ENCODE measurements at regions of chr9 and their contacts with region 1.

Region 1: DNA sequence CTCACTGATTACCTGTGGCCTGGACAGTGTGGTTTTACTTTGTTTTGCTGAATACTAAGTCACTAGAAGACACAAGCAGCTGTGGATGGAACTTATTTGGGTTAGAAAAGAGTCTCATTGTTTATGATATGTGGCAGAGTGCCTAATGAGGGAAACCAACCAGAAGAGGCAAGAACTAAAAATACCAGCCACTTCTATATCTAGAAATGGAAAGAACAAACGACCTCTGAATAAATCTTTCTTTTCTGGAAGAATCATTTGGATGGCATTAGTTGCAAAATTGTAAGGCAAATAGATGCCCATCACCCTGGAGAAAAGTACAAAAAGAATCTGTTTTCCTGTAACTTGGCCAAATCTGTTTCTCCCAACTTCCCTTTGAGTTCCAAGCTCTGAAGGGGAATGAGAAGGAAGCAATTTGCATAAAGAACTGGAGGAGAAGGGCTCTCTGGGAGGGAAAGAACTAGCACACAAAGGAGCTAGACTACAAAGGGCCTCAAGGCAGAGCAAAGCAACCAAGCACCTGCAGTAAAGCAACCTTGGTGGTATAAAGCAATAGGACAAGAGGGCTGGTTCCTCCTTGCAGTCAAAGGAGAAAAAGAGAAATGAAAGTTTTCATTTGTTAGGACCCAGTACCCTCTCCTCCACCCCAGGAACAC is 455.4 kb downstream of the CAAP1 start:
- DNase-seq: no peak
- H3K4me3 Mint-ChIP-seq: no peak overlapping the region
- H3K27ac Mint-ChIP-seq: no peak overlapping the region
- H3K4me1 Mint-ChIP-seq: no peaks in the 10 kb centered on the region
- H3K27me3 Mint-ChIP-seq: no peaks in the 10 kb centered on the region

Region 2: DNA sequence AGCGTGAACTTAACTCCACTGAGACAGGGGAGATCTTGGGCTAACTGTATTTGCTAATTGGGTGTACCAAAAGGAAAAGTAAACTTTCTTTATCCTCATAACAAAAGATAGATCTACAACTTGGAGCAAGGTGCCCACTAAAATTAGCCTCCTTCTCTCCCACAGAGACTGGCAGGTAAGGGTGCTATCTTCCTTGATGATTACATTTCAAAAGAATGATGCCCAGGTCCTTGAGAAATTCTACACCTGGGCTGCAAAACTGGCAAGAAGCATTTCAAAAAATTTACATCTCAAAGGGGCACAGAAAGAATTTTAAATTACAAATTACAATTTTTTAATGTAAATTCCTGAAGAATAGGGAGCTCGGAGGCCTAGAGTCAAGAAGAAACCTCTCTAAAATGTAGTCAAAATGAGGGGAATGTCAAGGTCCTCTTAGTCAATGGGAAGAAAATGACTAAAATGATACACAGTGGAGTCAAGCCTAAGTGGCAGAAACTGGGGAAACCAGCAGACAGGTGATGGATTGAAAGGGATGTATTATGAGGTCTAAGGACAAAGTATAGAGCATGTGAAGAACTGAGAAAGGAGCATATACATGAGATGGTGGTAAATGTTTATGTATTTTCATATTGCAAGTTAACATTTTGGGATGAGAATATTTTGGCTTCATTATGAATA is 410.6 kb before region 1 on chr9:
- intact Hi-C with region 1: loop called (anchors 5 kb)
- DNase-seq: no peak
- H3K4me3 Mint-ChIP-seq: no peak overlapping the region
- H3K27ac Mint-ChIP-seq: no peak overlapping the region
- H3K4me1 Mint-ChIP-seq: no peaks in the 10 kb centered on the region
- H3K27me3 Mint-ChIP-seq: no peaks in the 10 kb centered on the region

Region 3: DNA sequence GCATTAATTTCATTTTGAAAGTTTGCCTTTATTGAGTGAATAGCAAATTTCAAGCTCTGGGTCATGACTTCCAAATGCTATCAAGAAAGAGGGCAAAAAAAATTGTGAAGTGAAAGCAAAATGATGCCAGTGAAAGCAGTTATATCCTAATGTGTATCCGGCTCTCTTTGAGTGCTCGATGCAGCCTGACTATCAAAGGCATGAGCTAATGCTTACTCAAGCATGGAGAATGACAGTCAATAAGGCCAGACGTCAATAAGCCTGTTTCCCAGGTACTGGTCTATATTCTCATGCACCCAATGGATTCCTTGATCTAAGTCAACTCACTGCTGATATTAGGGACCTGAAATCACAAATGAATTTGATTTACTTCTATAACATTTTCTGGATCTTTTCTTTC is 20.0 kb after region 1 on chr9:
- intact Hi-C with region 1: no loop called
- DNase-seq: no peak
- H3K4me3 Mint-ChIP-seq: no peak overlapping the region
- H3K27ac Mint-ChIP-seq: no peak overlapping the region
- H3K4me1 Mint-ChIP-seq: no peaks in the 10 kb centered on the region
- H3K27me3 Mint-ChIP-seq: no peaks in the 10 kb centered on the region

Measured in activated CD4-positive, alpha-beta T cell treated with anti-CD3 and anti-CD28 coated beads, Interleukin-2, amount 10 ng/mL, durations not matched to agents 24 days and 14 days (primary cell).